ENCODE measurements at regions of chr14 and their contacts with region 1.

Region 1: DNA sequence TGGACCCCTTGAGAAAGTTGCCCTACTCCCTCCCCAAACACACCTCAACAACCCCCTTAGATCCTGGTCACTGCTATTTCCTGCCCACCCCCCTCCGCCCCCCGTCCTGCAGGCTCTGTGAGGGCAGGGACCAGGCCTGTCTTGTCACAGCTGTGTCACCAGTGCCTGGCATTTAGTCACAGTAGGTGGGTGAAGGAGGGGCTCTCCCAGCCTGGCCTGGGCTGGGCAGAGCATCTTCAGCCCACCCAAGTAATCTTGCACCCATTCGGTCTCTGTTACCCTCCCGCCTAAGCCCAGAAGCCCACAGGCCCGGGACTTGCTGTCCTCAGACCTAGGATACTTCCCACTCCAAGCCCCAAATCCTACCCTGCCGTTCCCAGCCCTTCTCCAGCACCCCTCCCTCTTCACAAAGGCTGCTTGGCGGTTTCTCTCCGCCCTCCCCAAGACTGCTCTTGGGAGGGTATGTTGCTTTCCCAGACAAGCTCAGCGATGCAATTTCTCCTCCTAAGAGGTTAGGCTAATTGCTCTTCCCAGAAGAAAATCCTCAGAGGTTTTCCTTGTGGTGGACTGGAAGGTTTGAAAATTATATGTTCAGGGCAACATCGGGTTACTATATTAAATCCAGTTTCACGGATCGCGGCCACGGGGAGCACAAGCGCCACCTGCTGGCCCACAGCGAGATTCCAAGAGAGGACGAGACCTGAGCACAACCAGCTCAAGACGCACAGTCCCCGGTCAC is 50.8 kb upstream of the ZFP36L1 start:
- DNase-seq: peak in 1 of 2 donors; percentile 87
- H3K4me3 ChIP-seq: peak overlapping the region; percentile 31 to 52
- H3K27ac ChIP-seq: no peak overlapping the region
- H3K4me1 ChIP-seq: no peaks in the 10 kb centered on the region
- H3K27me3 ChIP-seq: no peaks in the 10 kb centered on the region
- CTCF ChIP-seq: peak; percentile 66 to 93 (median 87)

Region 2: GRCh38 chr14:67837011-67837624 is 1006.5 kb before region 1 on chr14:
- intact Hi-C with region 1: loop called (anchors 5 kb)
- DNase-seq: peak in 1 of 2 donors; percentile 71
- H3K4me3 ChIP-seq: no peak overlapping the region
- H3K27ac ChIP-seq: no peak overlapping the region
- H3K4me1 ChIP-seq: no peaks in the 10 kb centered on the region
- H3K27me3 ChIP-seq: no peaks in the 10 kb centered on the region
- CTCF ChIP-seq: peak; percentile 40 to 51 (median 50)

Region 3: GRCh38 chr14:67883717-67884116 is 959.9 kb before region 1 on chr14:
- intact Hi-C with region 1: loop called (anchors 5 kb)
- DNase-seq: no peak
- H3K4me3 ChIP-seq: no peak overlapping the region
- H3K27ac ChIP-seq: no peak overlapping the region
- H3K4me1 ChIP-seq: peaks cover 0 to 3% of the 10 kb centered on the region in 2 donors
- H3K27me3 ChIP-seq: no peaks in the 10 kb centered on the region
- CTCF ChIP-seq: peak in 2 of 3 experiments; percentile 25 to 40

Region 4: DNA sequence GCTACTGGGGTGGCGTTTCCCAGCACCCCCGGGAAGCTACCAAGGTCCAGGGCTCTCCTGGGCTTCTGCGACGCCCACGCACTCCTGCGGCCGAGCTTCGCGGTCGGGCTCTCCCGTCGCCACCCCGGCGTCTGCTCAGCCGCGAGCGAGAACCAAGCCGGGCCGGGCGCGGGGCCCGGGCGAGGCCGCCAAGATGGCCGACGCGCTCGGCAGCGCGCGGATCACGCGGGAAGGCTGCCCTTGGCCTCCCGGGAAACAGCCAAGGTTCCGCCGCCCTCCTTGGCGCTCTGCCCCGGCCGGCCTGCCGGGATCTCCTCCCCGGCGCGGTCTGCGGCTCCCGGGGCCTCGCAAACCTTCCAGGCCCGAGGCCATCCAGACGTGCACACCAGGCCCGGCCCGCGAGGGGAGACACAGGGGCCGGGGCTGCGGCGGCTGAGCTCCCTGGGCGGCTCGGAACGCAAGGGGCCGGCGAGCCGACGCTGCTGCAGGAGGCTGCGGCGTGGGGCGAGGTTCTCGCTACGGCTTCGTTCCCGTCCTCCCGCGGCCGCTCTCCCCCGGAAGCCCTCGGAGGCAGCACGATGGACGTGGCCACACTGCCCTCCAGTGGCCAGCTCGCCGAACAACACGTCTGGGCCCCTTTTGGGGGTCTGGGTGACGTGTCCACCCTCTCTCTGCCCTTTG is 27.2 kb before region 1 on chr14:
- intact Hi-C with region 1: no loop called
- DNase-seq: peak; percentile 56 to 93
- H3K4me3 ChIP-seq: peak overlapping the region; percentile 56 to 67
- H3K27ac ChIP-seq: peak overlapping the region; percentile 96 to 97
- H3K4me1 ChIP-seq: peaks cover 12 to 24% of the 10 kb centered on the region in 2 donors
- H3K27me3 ChIP-seq: no peaks in the 10 kb centered on the region
- CTCF ChIP-seq: peak; percentile 95 to 100 (median 98)

Measured in ascending aorta (tissue), 2 donors.